Upper lobe of right lung (tissue), 1 donor: ENCODE measurements at regions of chr11 and their contacts with region 1.

Region 1: DNA sequence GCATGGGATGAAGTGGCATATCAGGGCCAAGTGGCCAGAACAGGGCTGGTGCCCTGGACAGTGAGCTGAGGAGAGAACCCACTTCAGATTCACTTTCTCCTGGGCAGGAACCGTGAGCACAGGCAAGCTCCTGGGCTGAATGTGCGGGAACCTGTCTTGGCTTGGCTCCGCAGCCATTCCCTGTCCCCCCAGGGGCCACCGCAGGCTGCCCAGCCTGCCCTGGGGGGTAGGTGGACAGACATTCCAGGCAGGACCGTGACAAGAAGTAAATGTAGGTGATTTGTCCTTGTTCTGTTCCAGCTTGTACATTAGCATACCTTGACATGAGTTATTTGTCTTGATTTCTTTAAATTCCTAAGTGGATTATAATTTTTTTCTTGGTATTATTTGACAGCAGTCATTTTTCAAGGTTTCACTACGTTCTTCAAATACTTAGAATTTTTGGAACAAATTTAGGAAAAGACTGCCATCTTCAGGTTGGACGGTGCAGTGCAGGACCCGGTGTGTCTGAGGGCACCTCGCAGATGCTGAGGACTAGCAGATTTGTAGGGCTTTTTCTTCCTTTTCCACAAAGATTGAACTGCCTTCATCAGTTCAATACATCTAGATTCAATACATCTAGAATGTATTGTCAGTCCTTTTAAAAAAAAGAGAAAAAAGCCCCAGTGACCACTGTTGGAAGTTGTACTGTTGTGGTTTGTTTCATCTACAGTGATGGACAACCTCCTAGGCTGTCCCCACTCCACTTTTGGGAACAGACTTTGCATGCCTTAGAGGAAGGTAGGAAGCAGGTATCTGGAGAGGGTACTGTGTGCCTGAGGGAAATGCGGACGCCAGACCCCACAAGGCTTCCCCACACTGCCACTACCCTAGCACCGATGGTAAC is 115.1 kb upstream of the RASSF10 start:
- DNase-seq: peak; percentile 71
- ATAC-seq: peak; percentile 67
- H3K4me3 ChIP-seq: no peak overlapping the region
- H3K27ac ChIP-seq: no peak overlapping the region
- H3K4me1 ChIP-seq: peaks cover 7% of the 10 kb centered on the region
- H3K27me3 ChIP-seq: no peaks in the 10 kb centered on the region
- CTCF ChIP-seq: peak; percentile 87

Region 2: GRCh38 chr11:12331239-12331874 is 562.7 kb before region 1 on chr11:
- intact Hi-C with region 1: loop called (anchors 5 kb)
- DNase-seq: peak; percentile 78
- ATAC-seq: peak; percentile 93
- H3K4me3 ChIP-seq: no peak overlapping the region
- H3K27ac ChIP-seq: no peak overlapping the region
- H3K4me1 ChIP-seq: no peaks in the 10 kb centered on the region
- H3K27me3 ChIP-seq: no peaks in the 10 kb centered on the region
- CTCF ChIP-seq: peak; percentile 81